ENCODE measurements at regions of chr12 and their contacts with region 1.

Region 1: DNA sequence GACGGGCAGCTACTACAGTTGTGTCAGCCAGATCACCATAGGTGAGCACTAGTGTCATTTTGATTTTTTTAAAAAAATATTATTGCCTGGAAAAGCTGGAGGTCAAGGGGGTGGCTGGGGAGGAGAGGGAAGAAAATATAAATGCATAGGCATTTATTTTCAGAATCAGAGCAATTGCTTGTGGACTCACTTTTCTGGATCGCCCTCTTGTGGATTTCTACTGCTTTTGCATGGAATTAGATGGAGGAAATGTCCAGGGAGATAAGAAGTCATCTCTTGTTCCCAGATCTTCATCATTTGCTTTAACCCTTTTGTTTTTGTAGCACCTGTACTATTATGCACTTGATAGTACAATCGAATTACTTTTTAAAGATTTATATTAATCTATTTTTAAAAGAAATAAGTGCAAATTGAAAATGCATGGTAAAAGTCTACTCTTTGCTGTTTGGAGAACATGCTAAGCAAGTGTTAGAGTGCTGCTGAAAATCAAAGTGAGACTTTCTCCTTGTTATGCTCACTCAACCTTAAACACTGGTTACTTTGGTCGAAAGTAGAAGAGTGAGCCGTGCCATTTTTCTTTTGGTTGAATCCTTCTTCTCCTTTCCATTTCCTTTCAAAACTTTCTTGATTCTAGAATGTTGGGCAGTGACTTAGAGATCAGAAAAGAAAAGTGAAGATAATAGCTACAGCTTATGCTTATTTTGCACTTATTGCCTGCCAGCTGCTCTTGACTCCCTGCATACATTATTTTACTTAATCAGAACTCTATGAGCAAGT is 60.6 kb upstream of the ANO4 start:
- DNase-seq: peak; percentile 25
- H3K4me3 Mint-ChIP-seq: no peak overlapping the region
- H3K27ac Mint-ChIP-seq: no peak overlapping the region
- H3K4me1 Mint-ChIP-seq: no peaks in the 10 kb centered on the region
- H3K27me3 Mint-ChIP-seq: no peaks in the 10 kb centered on the region
- CTCF ChIP-seq: peak; percentile 24

Region 2: DNA sequence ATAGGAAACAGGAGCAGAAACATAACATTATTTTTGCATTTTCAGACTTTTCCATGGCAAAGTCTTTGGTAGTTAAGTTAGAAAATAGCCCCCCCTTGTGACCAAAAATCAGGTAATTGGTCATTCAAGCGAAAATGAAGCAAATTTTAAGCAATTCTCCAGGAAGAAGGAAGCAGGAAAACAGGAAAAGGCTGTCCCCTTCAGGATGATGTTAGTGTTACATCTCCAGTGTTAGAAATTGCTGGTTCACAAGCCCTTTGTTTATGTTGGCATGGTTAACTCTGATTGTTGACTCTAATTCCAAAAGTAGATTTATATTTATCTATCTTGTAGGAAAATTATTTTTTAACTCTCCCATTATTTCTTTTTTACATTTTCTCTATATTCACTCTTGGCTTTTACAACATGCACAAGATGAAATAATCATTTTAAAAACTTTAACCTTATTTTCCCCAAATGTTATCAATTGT is 179.4 kb before region 1 on chr12:
- CTCF ChIA-PET with region 1: interaction called, 3 read pairs
- intact Hi-C with region 1: loop called (anchors 5 kb)
- DNase-seq: peak; percentile 74
- H3K4me3 Mint-ChIP-seq: no peak overlapping the region
- H3K27ac Mint-ChIP-seq: no peak overlapping the region
- H3K4me1 Mint-ChIP-seq: peaks cover 9% of the 10 kb centered on the region
- H3K27me3 Mint-ChIP-seq: no peaks in the 10 kb centered on the region
- CTCF ChIP-seq: peak; percentile 78

Region 3: GRCh38 chr12:100668945-100669536 is 65.0 kb before region 1 on chr12:
- CTCF ChIA-PET with region 1: no interaction called
- intact Hi-C with region 1: loop called (anchors 1 kb)
- DNase-seq: peak; percentile 92
- H3K4me3 Mint-ChIP-seq: no peak overlapping the region
- H3K27ac Mint-ChIP-seq: no peak overlapping the region
- H3K4me1 Mint-ChIP-seq: peaks cover 24% of the 10 kb centered on the region
- H3K27me3 Mint-ChIP-seq: no peaks in the 10 kb centered on the region
- CTCF ChIP-seq: peak; percentile 91